GM12878 (cell line): ENCODE measurements at regions of chr20 and their contacts with region 1.

Region 1: GRCh38 chr20:5001174-5002076 is at the start of gene SLC23A2:
- DNase-seq: no peak
- ATAC-seq: peak; percentile 59
- H3K4me3 ChIP-seq: peak within 1 kb of the TSS; percentile 94
- H3K27ac ChIP-seq: no peak within 1 kb of the TSS
- H3K4me1 ChIP-seq: peaks cover 11% of the 10 kb centered on the region
- H3K27me3 ChIP-seq: no peaks in the 10 kb centered on the region; a peak in 1 of 4 replicates
- CTCF ChIP-seq: no peak
- EP300 ChIP-seq: no peak
- POLR2A ChIP-seq: peak; percentile 68
- RAD21 ChIP-seq: no peak
- polyA plus RNA-seq, gene SLC23A2: 4.4 to 5.9 TPM

Region 2: GRCh38 chr20:4985658-4986057 is 15.8 kb before region 1 on chr20:
- CTCF ChIA-PET with region 1: interaction called, 18 read pairs
- POLR2A ChIA-PET with region 1: interaction called, 36 read pairs
- RAD21 ChIA-PET with region 1: interaction called, 22 read pairs
- SMC1A ChIA-PET with region 1: interaction called, 53 read pairs
- in situ Hi-C with region 1: no loop called
- intact Hi-C with region 1: no loop called
- DNase-seq: peak; percentile 24
- ATAC-seq: peak; percentile 77
- H3K4me3 ChIP-seq: peak overlapping the region; percentile 13; the same call in 1 of the 2 replicates
- H3K27ac ChIP-seq: peak overlapping the region; percentile 11; the same call in 1 of the 2 replicates
- H3K4me1 ChIP-seq: peaks cover 25% of the 10 kb centered on the region
- H3K27me3 ChIP-seq: no peaks in the 10 kb centered on the region
- CTCF ChIP-seq: no peak
- EP300 ChIP-seq: no peak
- POLR2A ChIP-seq: no peak
- RAD21 ChIP-seq: no peak

Region 3: DNA sequence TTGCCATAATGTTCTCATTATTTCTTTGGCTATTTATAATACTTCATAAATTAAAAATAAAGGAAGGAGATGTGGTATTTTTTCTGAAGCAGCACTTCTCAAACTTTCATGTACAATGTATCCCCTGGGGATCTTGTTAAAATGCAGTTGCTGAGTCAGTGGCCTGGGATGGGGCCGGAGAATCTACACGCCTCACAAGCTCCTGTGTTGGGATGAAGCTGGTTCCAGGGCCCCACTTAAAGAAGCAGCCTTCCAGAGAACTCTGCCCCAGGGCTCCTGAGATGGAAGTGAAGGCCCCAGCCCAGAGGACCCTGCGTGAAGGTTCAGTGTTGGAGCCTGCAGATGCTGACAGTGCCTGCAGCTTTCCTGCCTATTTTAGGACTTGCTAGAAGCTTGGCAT is 40.0 kb after region 1 on chr20:
- CTCF ChIA-PET with region 1: interaction called, 3 read pairs
- POLR2A ChIA-PET with region 1: interaction called, 6 read pairs
- RAD21 ChIA-PET with region 1: interaction called, 7 read pairs
- SMC1A ChIA-PET with region 1: interaction called, 16 read pairs
- in situ Hi-C with region 1: no loop called
- intact Hi-C with region 1: no loop called
- DNase-seq: no peak
- ATAC-seq: no peak
- H3K4me3 ChIP-seq: no peak overlapping the region
- H3K27ac ChIP-seq: no peak overlapping the region
- H3K4me1 ChIP-seq: peaks cover 3% of the 10 kb centered on the region; the same call in 1 of the 2 replicates
- H3K27me3 ChIP-seq: no peaks in the 10 kb centered on the region; a peak in 1 of 4 replicates
- CTCF ChIP-seq: no peak
- EP300 ChIP-seq: no peak
- POLR2A ChIP-seq: no peak
- RAD21 ChIP-seq: no peak